ENCODE measurements at regions of chr15 and their contacts with region 1.

Region 1: DNA sequence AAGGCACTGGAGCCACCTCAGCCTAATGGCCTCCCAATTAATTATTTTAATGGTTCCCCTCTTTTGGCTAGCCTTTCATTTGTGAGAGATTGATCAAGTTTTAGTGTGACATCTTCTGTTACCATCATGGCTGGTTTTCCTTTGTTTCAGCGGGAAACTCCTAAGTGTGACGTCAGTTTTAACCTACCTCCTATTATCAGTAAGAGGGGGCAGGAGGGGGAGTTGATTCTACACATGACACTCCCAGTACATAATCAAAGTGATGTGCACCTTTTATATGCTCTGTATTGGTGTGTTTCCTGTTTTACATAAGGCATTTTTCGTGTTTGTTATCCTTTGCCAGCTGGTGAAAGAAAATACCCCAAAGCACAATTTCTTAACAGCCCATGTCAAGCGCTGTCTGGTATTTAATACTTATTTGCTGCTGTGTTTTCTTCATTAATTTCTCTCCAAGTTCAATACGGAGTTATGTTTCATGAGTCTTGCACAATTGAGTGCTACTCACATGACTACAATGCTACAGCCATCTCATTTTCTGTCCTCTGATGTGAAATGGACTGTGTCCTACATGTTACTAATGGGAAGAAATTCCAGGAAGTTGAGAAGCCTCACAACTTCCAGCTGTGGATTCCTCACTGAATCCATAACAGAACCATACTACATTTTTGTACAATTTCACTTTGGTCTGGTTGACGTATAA is 52.2 kb upstream of the POLR2M start:
- DNase-seq: no peak
- ATAC-seq: no peak
- H3K4me3 ChIP-seq: no peak overlapping the region
- H3K27ac ChIP-seq: no peak overlapping the region
- H3K4me1 ChIP-seq: no peaks in the 10 kb centered on the region
- H3K27me3 ChIP-seq: peaks cover 3 to 5% of the 10 kb centered on the region in 2 experiments; a peak in 4 of 5 replicates
- CTCF ChIP-seq: no peak
- EP300 ChIP-seq: no peak
- POLR2A ChIP-seq: no peak
- RAD21 ChIP-seq: no peak

Region 2: DNA sequence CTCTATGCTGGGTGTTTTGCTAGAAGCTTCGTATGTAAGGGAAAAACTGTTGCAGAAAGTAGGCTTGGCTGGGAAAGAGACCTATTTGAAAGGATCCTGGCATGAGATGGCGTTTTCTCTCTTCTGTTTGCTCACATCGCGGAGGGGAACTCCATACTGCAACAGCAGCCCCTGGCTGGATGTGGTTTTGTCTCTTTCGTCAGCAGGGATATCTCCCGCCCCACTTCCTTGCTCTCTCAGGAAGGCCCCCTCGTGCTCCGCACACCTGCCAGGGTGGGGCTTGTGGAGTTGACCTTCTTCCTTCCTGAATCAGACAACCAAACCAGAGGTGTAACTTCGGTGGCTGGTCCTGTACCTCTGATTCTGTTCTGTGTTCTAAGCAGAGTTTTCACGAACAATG is 89.0 kb before region 1 on chr15:
- CTCF ChIA-PET with region 1: no interaction called
- POLR2A ChIA-PET with region 1: no interaction called
- in situ Hi-C with region 1: no loop called
- intact Hi-C with region 1: no loop called
- DNase-seq: no peak
- ATAC-seq: no peak
- H3K4me3 ChIP-seq: no peak overlapping the region
- H3K27ac ChIP-seq: no peak overlapping the region
- H3K4me1 ChIP-seq: no peaks in the 10 kb centered on the region; a peak in 1 of 5 replicates
- H3K27me3 ChIP-seq: peaks cover 15 to 27% of the 10 kb centered on the region in 2 experiments
- CTCF ChIP-seq: no peak
- EP300 ChIP-seq: no peak
- POLR2A ChIP-seq: no peak
- RAD21 ChIP-seq: no peak

Region 3: GRCh38 chr15:57667171-57667849 is 13.0 kb after region 1 on chr15:
- CTCF ChIA-PET with region 1: no interaction called
- POLR2A ChIA-PET with region 1: interaction called, 14 read pairs
- in situ Hi-C with region 1: no loop called
- intact Hi-C with region 1: no loop called
- DNase-seq: peak in 2 of 4 experiments; percentile 9 to 12
- ATAC-seq: peak; percentile 48; the same call in 2 of the 3 replicates
- H3K4me3 ChIP-seq: no peak overlapping the region
- H3K27ac ChIP-seq: no peak overlapping the region
- H3K4me1 ChIP-seq: no peaks in the 10 kb centered on the region
- H3K27me3 ChIP-seq: peaks cover 6 to 12% of the 10 kb centered on the region in 2 experiments
- CTCF ChIP-seq: peak; percentile 32 to 51 (median 43); a peak in 4 of 6 replicates
- EP300 ChIP-seq: no peak
- POLR2A ChIP-seq: no peak
- RAD21 ChIP-seq: peak; percentile 62 to 63

Region 4: DNA sequence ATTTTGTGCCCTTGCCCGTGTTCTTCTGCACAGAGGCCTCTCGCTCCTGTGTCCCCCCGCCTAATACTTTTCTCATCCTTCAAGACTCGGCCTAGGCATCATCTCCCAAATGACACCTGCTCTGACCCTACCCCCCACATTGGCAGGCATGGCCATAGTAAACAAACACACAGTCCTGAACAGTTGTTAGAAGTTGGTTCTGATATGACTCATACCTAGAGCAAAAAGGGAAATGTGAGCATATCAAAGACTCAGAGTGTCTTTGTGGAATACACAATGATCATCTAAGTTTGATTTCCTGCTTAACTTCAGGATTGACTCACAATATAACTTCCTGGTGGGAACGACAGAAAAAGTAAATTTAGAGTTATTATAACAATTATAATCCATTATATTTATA is 172.7 kb after region 1 on chr15:
- CTCF ChIA-PET with region 1: no interaction called
- POLR2A ChIA-PET with region 1: no interaction called
- in situ Hi-C with region 1: no loop called
- intact Hi-C with region 1: no loop called
- DNase-seq: no peak
- ATAC-seq: no peak
- H3K4me3 ChIP-seq: no peak overlapping the region
- H3K27ac ChIP-seq: no peak overlapping the region
- H3K4me1 ChIP-seq: no peaks in the 10 kb centered on the region
- H3K27me3 ChIP-seq: peaks cover 14 to 23% of the 10 kb centered on the region in 2 experiments
- CTCF ChIP-seq: no peak
- EP300 ChIP-seq: no peak
- POLR2A ChIP-seq: no peak
- RAD21 ChIP-seq: no peak

Measured in K562 (cell line).